Activated B cell treated with CpG ODN at 0.5 μM for 24 hours (primary cell): ENCODE measurements at regions of chr1 and their contacts with region 1.

Region 1: GRCh38 chr1:2194898-2195673 is 514 bp upstream of the FAAP20 start:
- DNase-seq: peak; percentile 87
- ATAC-seq: peak; percentile 77
- H3K4me3 Mint-ChIP-seq: peak overlapping the region; percentile 91
- H3K27ac Mint-ChIP-seq: peak overlapping the region; percentile 96
- H3K4me1 Mint-ChIP-seq: peaks cover 25% of the 10 kb centered on the region
- H3K27me3 Mint-ChIP-seq: no peaks in the 10 kb centered on the region
- CTCF ChIP-seq: peak; percentile 23

Region 2: GRCh38 chr1:1919304-1920056 is 275.6 kb before region 1 on chr1:
- CTCF ChIA-PET with region 1: no interaction called
- POLR2A ChIA-PET with region 1: no interaction called
- intact Hi-C with region 1: loop called (anchors 1 kb)
- DNase-seq: peak; percentile 100
- ATAC-seq: peak; percentile 90
- H3K4me3 Mint-ChIP-seq: peak overlapping the region; percentile 73
- H3K27ac Mint-ChIP-seq: peak overlapping the region; percentile 56
- H3K4me1 Mint-ChIP-seq: no peaks in the 10 kb centered on the region
- H3K27me3 Mint-ChIP-seq: no peaks in the 10 kb centered on the region
- CTCF ChIP-seq: no peak

Region 3: DNA sequence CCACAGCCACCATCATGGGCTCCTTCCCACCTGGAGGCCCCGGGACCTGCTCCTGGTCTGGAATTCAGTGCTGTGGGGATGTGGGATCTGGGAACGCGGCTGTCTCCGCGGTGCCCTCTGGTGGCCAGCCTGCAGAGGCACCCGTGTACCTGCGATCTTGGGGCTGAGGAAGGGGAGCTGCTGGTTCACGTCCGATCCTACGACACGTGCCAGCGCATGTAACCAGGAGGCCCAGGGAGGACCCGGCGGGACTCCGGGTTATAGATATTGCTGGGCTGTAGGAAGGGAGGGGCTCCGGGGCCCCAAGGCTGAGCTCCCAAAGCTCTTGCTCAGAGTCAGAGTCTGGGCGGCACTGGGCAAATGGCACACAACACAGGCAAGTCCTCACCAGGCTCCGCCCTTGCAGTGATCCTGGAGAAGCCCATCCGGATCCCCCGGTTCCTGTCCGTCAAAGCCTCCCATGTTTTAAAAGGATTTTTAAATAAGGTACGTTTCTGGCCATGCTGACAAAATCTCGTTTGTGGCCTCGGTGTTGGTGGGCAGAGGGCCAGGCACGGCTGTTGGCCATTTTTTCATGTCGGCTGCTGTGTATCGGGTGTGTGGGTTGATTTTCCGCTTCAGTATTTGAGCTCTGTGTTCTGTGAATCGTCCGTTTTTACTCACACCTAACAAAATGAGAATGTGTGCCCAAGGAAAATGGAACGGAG is 20.6 kb before region 1 on chr1:
- CTCF ChIA-PET with region 1: interaction called, 10 read pairs
- POLR2A ChIA-PET with region 1: interaction called, 3 read pairs
- intact Hi-C with region 1: no loop called
- DNase-seq: peak; percentile 31
- ATAC-seq: peak; percentile 61
- H3K4me3 Mint-ChIP-seq: no peak overlapping the region
- H3K27ac Mint-ChIP-seq: no peak overlapping the region
- H3K4me1 Mint-ChIP-seq: peaks cover 1% of the 10 kb centered on the region
- H3K27me3 Mint-ChIP-seq: no peaks in the 10 kb centered on the region
- CTCF ChIP-seq: no peak

Region 4: DNA sequence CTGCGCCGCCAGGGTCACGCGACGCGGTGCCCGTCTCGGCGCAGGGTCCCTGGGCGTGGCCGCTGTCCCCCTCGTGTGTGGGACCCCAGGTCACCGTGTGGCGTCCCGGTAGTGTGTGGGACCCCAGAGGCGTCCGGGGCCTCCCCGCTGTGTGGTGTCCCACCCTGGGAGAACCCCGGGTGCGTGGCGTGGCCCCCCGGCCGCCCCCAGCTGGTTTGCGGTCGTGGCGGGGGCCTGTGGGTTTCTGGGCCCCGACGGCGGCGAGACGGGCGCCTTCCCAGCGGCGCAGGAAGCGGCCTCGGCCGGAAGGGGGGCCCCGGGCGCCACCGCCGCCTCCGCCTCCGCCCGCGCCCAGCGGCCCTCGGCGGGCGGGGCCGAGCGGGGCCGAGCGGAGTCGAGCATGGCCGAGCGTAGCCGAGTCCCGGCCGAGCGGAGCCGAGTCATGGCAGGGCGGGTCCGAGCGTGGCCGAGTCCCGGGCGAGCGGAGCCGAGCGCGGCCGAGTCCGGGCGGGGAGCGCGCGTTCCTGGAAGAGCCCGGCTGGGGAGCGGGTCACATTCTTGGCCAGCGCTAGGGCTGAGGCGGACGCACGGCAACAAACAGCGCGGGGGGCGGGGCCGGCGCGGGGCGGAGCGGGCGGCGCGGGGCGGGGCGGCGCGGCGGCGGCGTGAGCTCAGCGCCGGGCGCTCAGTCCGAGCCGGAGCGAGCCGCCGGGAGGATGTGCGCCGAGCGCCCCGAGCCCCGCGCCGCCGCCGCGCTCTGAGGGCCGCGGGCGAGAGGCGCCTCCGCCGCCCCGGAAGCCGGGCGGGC is 32.5 kb after region 1 on chr1:
- CTCF ChIA-PET with region 1: interaction called, 6 read pairs
- POLR2A ChIA-PET with region 1: interaction called, 13 read pairs
- intact Hi-C with region 1: no loop called
- DNase-seq: peak; percentile 98
- ATAC-seq: peak; percentile 93
- H3K4me3 Mint-ChIP-seq: peak overlapping the region; percentile 76
- H3K27ac Mint-ChIP-seq: peak overlapping the region; percentile 56
- H3K4me1 Mint-ChIP-seq: peaks cover 37% of the 10 kb centered on the region
- H3K27me3 Mint-ChIP-seq: no peaks in the 10 kb centered on the region
- CTCF ChIP-seq: no peak

Region 5: DNA sequence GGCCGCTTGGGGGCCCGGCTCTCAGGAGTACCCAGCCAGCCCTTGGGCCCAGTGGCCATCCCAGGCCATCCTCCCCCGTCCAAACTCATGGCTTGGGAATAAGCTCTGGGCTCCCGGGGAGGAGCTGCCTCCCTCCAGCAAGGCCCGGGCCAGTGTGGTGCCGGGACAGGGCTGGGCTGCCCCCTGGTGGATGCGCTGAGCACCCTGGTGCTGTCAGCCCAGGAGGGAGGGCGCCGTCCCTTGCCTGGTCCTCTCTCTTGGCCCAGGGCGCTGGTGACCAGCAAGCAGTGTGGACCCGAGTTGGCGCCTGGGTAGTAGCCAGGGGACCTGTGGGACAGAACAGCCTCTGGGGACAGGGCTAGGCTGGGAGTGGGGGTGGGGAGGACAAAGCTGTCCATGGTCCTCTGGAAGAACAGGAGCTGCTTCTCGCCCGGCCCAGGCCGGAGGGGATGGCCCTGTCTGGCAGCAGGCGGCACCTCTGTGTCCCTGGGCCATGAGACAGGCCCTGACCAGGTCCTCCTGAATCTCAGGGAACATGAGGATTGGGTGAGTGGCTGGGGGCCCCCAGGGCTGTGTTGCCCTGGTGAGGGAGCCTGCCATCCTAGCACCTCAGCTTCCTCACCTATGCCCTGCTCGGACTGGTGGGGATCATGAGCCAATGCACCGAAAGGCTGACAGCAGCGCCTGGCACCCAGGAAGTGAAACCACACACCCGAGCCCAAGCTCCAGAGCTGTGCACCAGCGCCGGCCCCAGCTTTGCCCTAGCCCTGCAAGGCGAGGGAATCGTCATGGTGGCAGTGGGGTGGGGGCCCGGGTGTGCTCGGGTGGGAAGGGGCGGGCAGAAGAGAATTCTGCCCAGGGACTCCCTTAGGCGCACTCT is 186.9 kb after region 1 on chr1:
- CTCF ChIA-PET with region 1: interaction called, 185 read pairs
- POLR2A ChIA-PET with region 1: interaction called, 89 read pairs
- intact Hi-C with region 1: loop called (anchors 1 kb)
- DNase-seq: peak; percentile 74
- ATAC-seq: peak; percentile 85
- H3K4me3 Mint-ChIP-seq: no peak overlapping the region
- H3K27ac Mint-ChIP-seq: no peak overlapping the region
- H3K4me1 Mint-ChIP-seq: peaks cover 25% of the 10 kb centered on the region
- H3K27me3 Mint-ChIP-seq: no peaks in the 10 kb centered on the region
- CTCF ChIP-seq: peak; percentile 31

Region 6: GRCh38 chr1:2412519-2413233 is 217.6 kb after region 1 on chr1 and contains the start of gene PEX10:
- CTCF ChIA-PET with region 1: interaction called, 7 read pairs
- POLR2A ChIA-PET with region 1: interaction called, 9 read pairs
- intact Hi-C with region 1: loop called (anchors 1 kb)
- DNase-seq: peak; percentile 100
- ATAC-seq: peak; percentile 93
- H3K4me3 Mint-ChIP-seq: peak within 1 kb of the TSS; percentile 83
- H3K27ac Mint-ChIP-seq: peak within 1 kb of the TSS; percentile 71
- H3K4me1 Mint-ChIP-seq: peaks cover 45% of the 10 kb centered on the region
- H3K27me3 Mint-ChIP-seq: no peaks in the 10 kb centered on the region
- CTCF ChIP-seq: no peak
- total RNA-seq, gene PEX10: 17.4 and 18.9 TPM in 2 replicates

Region 7: DNA sequence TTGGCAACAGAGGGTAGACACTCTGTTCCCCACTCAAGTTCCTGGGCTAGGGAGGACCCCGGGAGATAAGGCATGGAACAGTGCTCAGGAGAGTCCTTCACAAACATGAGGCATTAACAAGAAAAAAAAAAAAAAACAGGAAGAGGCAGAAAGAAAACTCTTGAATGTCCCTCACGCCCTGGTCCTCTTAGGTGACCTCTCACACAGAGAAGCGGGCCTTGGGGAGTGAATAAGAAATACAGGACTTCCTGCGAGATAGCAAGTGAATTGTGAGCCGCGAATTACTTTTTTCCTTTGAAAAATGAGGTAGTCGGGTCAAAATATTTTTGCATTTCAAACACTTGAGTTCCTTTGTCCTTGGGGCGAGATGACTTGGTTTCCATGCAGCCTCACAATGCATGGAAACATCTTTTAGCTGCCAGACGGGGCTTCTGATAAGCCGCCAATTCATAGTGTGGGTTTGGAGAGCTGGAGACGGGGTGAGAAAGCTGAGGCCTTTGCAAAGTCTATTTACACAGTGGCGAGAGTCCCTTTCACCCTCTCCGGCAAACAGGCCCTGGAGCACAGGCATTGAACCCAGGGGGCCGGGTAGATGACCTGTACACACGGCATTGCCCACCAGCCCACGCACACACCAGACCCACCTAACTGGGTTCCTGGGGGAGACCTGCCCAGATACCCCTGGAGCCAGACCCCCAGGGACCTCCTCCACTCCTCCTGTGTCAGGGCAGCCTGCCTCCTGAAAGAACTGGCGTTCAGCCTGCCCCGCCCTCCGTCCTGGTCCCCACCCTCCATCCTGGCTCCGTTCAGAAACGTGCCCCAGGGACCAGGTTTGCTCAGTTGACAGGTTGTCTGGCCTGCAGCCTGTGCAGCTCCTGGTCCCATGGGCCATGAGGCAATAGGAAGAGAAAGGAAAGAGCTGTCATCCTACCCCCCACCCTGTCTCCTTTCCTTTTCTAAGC is 1066.2 kb after region 1 on chr1:
- CTCF ChIA-PET with region 1: no interaction called
- POLR2A ChIA-PET with region 1: no interaction called
- intact Hi-C with region 1: no loop called
- DNase-seq: no peak
- ATAC-seq: no peak
- H3K4me3 Mint-ChIP-seq: no peak overlapping the region
- H3K27ac Mint-ChIP-seq: no peak overlapping the region
- H3K4me1 Mint-ChIP-seq: no peaks in the 10 kb centered on the region
- H3K27me3 Mint-ChIP-seq: no peaks in the 10 kb centered on the region
- CTCF ChIP-seq: no peak